ENCODE measurements at regions of chr16 and their contacts with region 1.

Region 1: DNA sequence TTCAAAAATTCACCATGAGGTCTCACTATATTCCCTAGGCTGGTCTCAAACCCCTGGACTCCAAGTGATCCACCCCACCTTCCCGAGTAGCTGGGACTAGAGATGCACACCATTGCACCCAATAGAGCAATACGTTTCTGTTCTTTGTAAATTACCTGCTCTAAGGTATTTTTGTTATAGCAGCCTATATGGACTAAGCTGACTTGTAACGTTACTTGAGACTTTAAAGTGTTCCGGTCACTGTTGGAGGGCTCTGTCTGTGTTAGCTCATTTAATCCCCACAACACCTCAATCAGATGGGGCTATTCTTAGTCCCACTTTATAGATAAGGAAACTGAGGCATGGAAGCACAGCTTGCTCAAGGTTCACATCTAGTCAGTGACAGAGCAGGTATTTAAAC is 25.4 kb downstream of the IL4R start:
- DNase-seq: no peak
- H3K4me3 Mint-ChIP-seq: no peak overlapping the region
- H3K27ac Mint-ChIP-seq: no peak overlapping the region
- H3K4me1 Mint-ChIP-seq: peaks cover 28% of the 10 kb centered on the region
- H3K27me3 Mint-ChIP-seq: no peaks in the 10 kb centered on the region

Region 2: GRCh38 chr16:27355610-27356009 is 16.4 kb after region 1 on chr16:
- CTCF ChIA-PET with region 1: interaction called, 11 read pairs
- POLR2A ChIA-PET with region 1: no interaction called
- DNase-seq: peak; percentile 43
- H3K4me3 Mint-ChIP-seq: no peak overlapping the region
- H3K27ac Mint-ChIP-seq: peak overlapping the region; percentile 36
- H3K4me1 Mint-ChIP-seq: peaks cover 23% of the 10 kb centered on the region
- H3K27me3 Mint-ChIP-seq: no peaks in the 10 kb centered on the region

Measured in activated CD4-positive, alpha-beta T cell treated with anti-CD3 and anti-CD28 coated beads, Interleukin-2, amount 10 ng/mL, durations not matched to agents 7 days and 5 days (primary cell).